Posterior vena cava (tissue), 2 donors: ENCODE measurements at regions of chr1 and their contacts with region 1.

Region 1: DNA sequence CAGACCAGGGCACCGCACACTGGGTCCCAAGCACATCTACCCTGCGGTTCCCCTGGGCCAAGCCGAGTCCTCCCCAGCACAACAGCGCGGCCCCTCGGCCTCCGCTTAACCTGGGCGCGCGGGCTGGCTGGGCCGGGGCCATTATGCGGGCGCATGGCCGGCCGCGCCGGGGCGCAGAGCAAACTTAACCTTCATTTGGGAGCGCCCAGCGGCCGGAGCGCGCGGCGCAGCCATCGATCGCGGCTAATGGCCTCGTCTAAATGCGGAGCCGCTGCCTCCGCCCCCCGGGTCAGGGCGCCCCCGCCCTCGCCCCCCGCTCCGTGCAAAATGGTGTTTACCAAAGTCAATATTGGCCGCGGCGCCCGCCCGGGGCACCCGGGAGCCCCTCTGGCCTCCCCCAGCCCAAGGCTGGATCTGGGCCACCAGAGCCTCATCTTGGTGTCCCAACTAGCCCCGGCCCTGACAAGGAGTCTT is 272.1 kb downstream of the TRABD2B start:
- DNase-seq: peak; percentile 84

Region 2: DNA sequence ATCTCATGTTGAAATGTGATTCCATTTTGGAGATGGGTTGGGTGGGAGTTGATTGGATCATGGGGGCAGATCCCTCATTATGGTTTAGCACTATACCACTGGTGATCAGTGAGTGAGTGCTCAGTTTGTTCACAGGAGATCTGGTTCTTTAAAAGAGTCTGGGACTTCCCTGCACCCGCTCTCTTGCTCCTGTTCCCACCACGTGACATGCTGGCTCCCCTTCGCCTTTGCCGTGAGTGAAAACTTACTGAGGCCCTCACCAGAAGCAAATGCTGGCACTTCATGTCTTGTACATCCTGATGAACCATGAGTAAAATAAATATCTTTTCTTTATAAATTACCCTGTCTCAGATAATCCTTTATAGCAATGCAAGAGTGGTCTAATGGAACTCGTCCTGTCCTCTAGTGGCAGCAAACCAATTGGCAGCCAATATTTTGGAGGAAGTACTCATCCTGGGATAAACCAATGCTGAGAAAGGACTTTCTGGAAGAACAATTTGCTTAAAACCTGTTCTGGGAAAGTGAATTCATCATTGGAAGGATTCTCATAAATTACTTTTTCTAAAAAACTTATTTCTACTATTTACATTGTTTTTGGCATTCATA is 755.9 kb before region 1 on chr1:
- intact Hi-C with region 1: no loop called
- DNase-seq: no peak

Region 3: GRCh38 chr1:47432071-47433036 is 292.7 kb before region 1 on chr1:
- intact Hi-C with region 1: loop called in 1 of 2 experiments (anchors 5 kb)
- DNase-seq: peak; percentile 93

Region 4: GRCh38 chr1:47547753-47548573 is 177.1 kb before region 1 on chr1:
- intact Hi-C with region 1: no loop called
- DNase-seq: peak; percentile 73

Region 5: DNA sequence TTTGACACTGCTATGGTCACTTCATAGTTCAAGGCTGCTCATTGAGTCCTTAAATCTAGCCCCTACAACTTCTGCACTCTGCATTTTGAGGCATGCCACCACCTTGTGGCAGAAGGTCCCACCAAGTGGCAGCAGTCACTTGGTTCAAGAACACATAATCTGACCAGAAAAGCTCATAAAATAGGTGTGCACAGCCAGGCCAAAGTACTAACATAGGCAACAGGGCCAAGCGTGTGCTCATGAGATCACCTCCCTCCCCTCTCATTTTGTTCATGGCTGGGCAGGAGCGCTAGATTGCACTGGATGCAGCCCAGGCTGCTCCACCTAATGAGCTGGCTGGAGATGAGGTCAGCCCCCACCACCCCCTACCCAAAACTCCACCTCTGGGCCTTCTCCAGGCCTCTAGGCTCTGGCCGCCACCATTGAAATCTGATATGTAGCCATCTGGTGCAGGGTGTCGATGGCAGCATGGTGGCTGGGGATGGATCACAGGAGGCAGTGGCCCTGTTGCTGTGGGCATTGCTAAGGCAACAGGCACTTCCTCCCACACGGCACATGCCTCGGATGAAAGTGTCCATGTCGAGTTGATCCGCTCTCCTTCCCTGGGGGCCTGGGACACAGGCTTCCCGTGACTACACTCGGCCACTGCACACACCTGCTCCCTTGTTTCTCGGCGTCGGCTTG is 78.9 kb after region 1 on chr1:
- intact Hi-C with region 1: no loop called
- DNase-seq: no peak